ENCODE measurements at regions of chr2 and their contacts with region 1.

Region 1: GRCh38 chr2:174697255-174697654 is 67.0 kb downstream of the CHRNA1 start:
- DNase-seq: peak in 34 of 35 experiments; percentile 26 to 79 (median 44)
- ATAC-seq: peak; percentile 85 to 94 (median 92)
- H3K4me3 ChIP-seq: no peak overlapping the region
- H3K4me3 Mint-ChIP-seq: no peak overlapping the region
- H3K27ac ChIP-seq: no peak overlapping the region
- H3K27ac Mint-ChIP-seq: no peak overlapping the region
- H3K4me1 ChIP-seq: no peaks in the 10 kb centered on the region
- H3K4me1 Mint-ChIP-seq: peaks cover 0 to 11% (median 4%) of the 10 kb centered on the region in 3 donors
- H3K27me3 ChIP-seq: peaks cover 2 to 18% of the 10 kb centered on the region in 2 experiments
- H3K27me3 Mint-ChIP-seq: peaks cover 0 to 5% of the 10 kb centered on the region in 2 donors

Region 2: DNA sequence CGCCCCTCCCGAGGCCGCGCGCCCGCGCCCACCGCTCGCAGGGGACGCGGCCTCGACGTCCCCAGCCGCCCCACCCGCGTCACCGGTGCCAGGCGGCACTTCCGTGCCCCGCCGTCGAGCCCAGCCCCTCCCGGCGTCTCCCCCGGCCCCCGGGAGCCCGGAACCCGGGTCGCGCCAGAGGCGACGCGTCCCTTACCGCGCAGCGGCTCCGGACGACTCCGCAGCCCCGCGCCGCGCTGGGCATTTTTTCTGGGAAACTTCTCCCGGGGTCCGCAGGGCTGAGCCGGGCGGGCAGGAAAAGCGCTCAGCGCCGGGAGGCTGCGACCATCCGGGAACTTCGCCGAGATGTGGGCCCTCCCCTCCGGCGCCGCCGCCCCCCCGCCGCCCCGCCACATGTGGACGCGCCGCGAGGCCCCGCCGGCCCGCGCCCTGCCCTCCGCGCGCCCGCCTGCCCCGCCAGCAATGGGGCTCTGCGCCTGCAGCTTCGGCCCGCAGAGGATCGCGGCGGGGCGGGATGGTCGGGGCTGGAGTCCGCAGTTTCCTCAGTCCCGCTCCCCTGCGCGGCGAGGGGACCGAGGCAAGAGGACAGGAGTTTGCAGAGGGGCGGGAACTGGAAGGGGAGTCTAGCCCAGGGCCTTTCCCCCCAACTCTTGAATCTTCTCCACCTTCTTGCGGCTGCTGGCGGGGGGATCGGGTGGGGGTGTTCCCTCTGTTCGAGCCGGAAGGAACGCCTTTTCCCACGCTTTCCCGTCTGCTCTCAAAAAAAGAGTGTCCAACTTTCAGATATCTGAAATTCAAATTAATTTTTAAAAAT is 14.5 kb before region 1 on chr2:
- CTCF ChIA-PET with region 1: interaction called, 27 to 49 read pairs
- POLR2A ChIA-PET with region 1: no interaction called
- DNase-seq: peak; percentile 28 to 78 (median 53)
- ATAC-seq: peak; percentile 76 to 80 (median 79)
- H3K4me3 ChIP-seq: peak overlapping the region; percentile 72 to 81
- H3K4me3 Mint-ChIP-seq: peak overlapping the region; percentile 85 to 96 (median 92)
- H3K27ac ChIP-seq: peak overlapping the region; percentile 25
- H3K27ac Mint-ChIP-seq: peak overlapping the region; percentile 90 to 92
- H3K4me1 ChIP-seq: peaks cover 0 to 18% of the 10 kb centered on the region in 2 experiments
- H3K4me1 Mint-ChIP-seq: peaks cover 54 to 57% (median 55%) of the 10 kb centered on the region in 3 donors
- H3K27me3 ChIP-seq: no peaks in the 10 kb centered on the region
- H3K27me3 Mint-ChIP-seq: no peaks in the 10 kb centered on the region

Region 3: GRCh38 chr2:174992886-174993285 is 295.6 kb after region 1 on chr2:
- CTCF ChIA-PET with region 1: interaction called, 8 to 33 read pairs
- POLR2A ChIA-PET with region 1: no interaction called
- DNase-seq: no peak
- ATAC-seq: no peak
- H3K4me3 ChIP-seq: no peak overlapping the region
- H3K4me3 Mint-ChIP-seq: no peak overlapping the region
- H3K27ac ChIP-seq: no peak overlapping the region
- H3K27ac Mint-ChIP-seq: no peak overlapping the region
- H3K4me1 ChIP-seq: peaks cover 0 to 3% of the 10 kb centered on the region in 2 experiments
- H3K4me1 Mint-ChIP-seq: peaks cover 3 to 11% (median 7%) of the 10 kb centered on the region in 3 donors
- H3K27me3 ChIP-seq: peaks cover 0 to 4% of the 10 kb centered on the region in 2 experiments
- H3K27me3 Mint-ChIP-seq: peaks cover 8 to 23% of the 10 kb centered on the region in 2 donors